ENCODE measurements at regions of chr17 and their contacts with region 1.

Region 1: DNA sequence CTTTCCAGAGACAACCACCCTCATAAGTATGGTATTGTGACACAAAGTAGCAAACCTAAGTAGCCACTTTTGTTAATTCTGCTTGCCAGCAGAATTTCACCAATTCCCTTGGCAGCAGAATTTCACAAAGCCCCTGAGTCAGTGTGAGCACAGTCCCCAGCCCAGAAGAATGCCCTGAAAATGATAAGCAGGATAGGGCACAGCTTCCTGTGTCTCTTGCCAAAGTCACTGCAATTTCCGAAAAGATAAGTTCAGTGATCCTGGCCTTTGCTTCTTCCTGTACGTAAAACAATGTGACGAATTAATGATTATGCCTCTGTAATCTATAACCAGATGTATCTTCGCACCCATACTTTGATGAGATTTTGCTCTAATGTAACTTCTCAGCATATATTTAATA is 16.0 kb upstream of the WIPF2 start:
- DNase-seq: no peak
- ATAC-seq: no peak
- H3K4me3 ChIP-seq: no peak overlapping the region
- H3K4me3 Mint-ChIP-seq: no peak overlapping the region
- H3K27ac ChIP-seq: no peak overlapping the region
- H3K27ac Mint-ChIP-seq: no peak overlapping the region
- H3K4me1 ChIP-seq: no peaks in the 10 kb centered on the region
- H3K4me1 Mint-ChIP-seq: peaks cover 0 to 8% (median 3%) of the 10 kb centered on the region in 7 donors
- H3K27me3 ChIP-seq: no peaks in the 10 kb centered on the region
- H3K27me3 Mint-ChIP-seq: peaks cover 0 to 14% (median 0%) of the 10 kb centered on the region in 5 donors

Region 2: DNA sequence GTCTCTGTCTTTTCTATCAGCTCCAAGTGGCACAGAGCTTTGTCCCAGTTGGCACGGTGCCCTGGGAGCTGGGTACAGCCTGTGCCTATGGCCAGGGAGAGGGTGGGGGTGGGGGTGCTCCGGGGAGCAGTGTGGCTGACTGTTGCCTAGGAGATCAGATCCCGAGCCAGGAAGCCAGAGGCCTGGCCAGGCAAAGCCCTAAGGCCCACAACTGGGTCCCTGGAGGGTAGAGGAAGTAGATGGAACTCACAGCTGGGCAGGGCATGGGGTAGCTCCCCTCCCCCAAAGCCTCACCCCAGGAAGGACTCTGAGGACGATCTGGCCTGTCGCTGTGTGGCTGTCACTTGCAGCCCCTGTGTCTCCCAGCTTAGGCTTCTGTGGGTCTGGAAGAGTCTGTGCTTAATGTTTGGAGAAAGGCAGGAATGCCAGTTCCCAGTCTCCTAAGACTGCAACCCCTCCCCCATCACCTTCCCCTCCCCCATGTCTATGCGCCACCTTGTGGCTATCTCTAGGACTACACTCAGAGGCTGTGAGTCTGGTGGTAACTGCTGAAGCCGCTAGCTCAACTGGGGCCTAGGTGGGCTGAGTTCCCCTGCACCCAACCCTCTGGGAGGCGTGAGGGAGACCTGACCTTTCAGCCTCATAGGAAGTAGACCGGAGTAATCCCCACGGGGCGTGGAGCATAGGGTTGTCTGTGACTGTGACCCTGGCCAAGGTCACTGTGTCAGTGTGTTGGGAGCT is 127.8 kb before region 1 on chr17:
- CTCF ChIA-PET with region 1: no interaction called
- POLR2A ChIA-PET with region 1: no interaction called
- intact Hi-C with region 1: no loop called
- DNase-seq: peak; percentile 45 to 80 (median 63)
- ATAC-seq: peak; percentile 93
- H3K4me3 ChIP-seq: no peak overlapping the region
- H3K4me3 Mint-ChIP-seq: peak overlapping the region in 8 of 10 donors; percentile 35 to 78 (median 71)
- H3K27ac ChIP-seq: peak overlapping the region; percentile 18
- H3K27ac Mint-ChIP-seq: peak overlapping the region in 8 of 9 donors; percentile 42 to 89 (median 68)
- H3K4me1 ChIP-seq: peaks cover 13 to 36% of the 10 kb centered on the region in 2 donors
- H3K4me1 Mint-ChIP-seq: peaks cover 7 to 67% (median 36%) of the 10 kb centered on the region in 7 donors
- H3K27me3 ChIP-seq: no peaks in the 10 kb centered on the region
- H3K27me3 Mint-ChIP-seq: no peaks in the 10 kb centered on the region

Region 3: GRCh38 chr17:40219073-40219860 is 16.1 kb after region 1 on chr17 and contains the start of gene WIPF2:
- CTCF ChIA-PET with region 1: interaction called, 9 read pairs
- POLR2A ChIA-PET with region 1: interaction called, 6 read pairs
- intact Hi-C with region 1: loop called (anchors 1 kb)
- DNase-seq: peak; percentile 88 to 97 (median 95)
- ATAC-seq: peak; percentile 96
- H3K4me3 ChIP-seq: peak within 1 kb of the TSS; percentile 74
- H3K4me3 Mint-ChIP-seq: peak within 1 kb of the TSS; percentile 86 to 100 (median 96)
- H3K27ac ChIP-seq: peak within 1 kb of the TSS; percentile 92
- H3K27ac Mint-ChIP-seq: peak within 1 kb of the TSS; percentile 96 to 100 (median 100)
- H3K4me1 ChIP-seq: peaks cover 9 to 10% of the 10 kb centered on the region in 2 donors
- H3K4me1 Mint-ChIP-seq: peaks cover 25 to 44% (median 32%) of the 10 kb centered on the region in 7 donors
- H3K27me3 ChIP-seq: no peaks in the 10 kb centered on the region
- H3K27me3 Mint-ChIP-seq: no peaks in the 10 kb centered on the region
- total RNA-seq, gene WIPF2: 24.8 to 31.8 (median 28.6) TPM

Region 4: GRCh38 chr17:40287494-40288369 is 84.6 kb after region 1 on chr17 and contains the start of gene CDC6:
- CTCF ChIA-PET with region 1: interaction called, 10 read pairs
- POLR2A ChIA-PET with region 1: interaction called, 4 read pairs
- intact Hi-C with region 1: loop called in 1 of 2 experiments (anchors 1 kb)
- DNase-seq: peak; percentile 90 to 99 (median 98)
- ATAC-seq: peak; percentile 97
- H3K4me3 ChIP-seq: peak within 1 kb of the TSS; percentile 70
- H3K4me3 Mint-ChIP-seq: peak within 1 kb of the TSS; percentile 93 to 99 (median 96)
- H3K27ac ChIP-seq: peak within 1 kb of the TSS; percentile 63
- H3K27ac Mint-ChIP-seq: peak within 1 kb of the TSS; percentile 84 to 98 (median 91)
- H3K4me1 ChIP-seq: peaks cover 3 to 11% of the 10 kb centered on the region in 2 donors
- H3K4me1 Mint-ChIP-seq: peaks cover 8 to 41% (median 22%) of the 10 kb centered on the region in 7 donors
- H3K27me3 ChIP-seq: no peaks in the 10 kb centered on the region
- H3K27me3 Mint-ChIP-seq: no peaks in the 10 kb centered on the region
- total RNA-seq, gene CDC6: 0.51 to 73.6 (median 0.85) TPM

Region 5: DNA sequence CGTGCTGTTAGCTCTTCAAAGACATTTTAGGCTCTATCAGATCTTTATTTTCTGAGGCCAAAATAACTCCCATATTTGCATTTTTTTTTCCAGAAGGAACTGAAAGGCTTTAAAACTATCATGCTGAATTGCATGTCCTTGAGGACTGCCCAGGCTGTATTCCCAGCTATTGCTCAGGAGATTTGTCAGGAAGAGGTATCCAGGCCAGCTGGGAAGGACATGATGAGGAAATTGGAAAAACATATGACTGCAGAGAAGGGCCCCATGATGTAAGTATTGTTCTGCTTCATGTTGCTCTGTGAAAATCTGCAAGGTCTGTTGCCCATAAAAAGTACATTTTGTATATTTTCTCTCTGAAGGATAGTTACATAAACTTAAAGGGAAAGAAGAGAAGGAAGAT is 90.2 kb after region 1 on chr17:
- CTCF ChIA-PET with region 1: interaction called, 10 read pairs
- POLR2A ChIA-PET with region 1: interaction called, 4 read pairs
- intact Hi-C with region 1: loop called in 1 of 2 experiments (anchors 1 kb)
- DNase-seq: no peak
- ATAC-seq: no peak
- H3K4me3 ChIP-seq: no peak overlapping the region
- H3K4me3 Mint-ChIP-seq: no peak overlapping the region
- H3K27ac ChIP-seq: no peak overlapping the region
- H3K27ac Mint-ChIP-seq: no peak overlapping the region
- H3K4me1 ChIP-seq: no peaks in the 10 kb centered on the region
- H3K4me1 Mint-ChIP-seq: peaks cover 0 to 38% (median 10%) of the 10 kb centered on the region in 7 donors
- H3K27me3 ChIP-seq: no peaks in the 10 kb centered on the region
- H3K27me3 Mint-ChIP-seq: no peaks in the 10 kb centered on the region

Region 6: GRCh38 chr17:40355123-40355803 is 152.1 kb after region 1 on chr17:
- CTCF ChIA-PET with region 1: no interaction called
- POLR2A ChIA-PET with region 1: no interaction called
- intact Hi-C with region 1: loop called (anchors 2 to 5 kb)
- DNase-seq: peak; percentile 63 to 93 (median 78)
- ATAC-seq: peak; percentile 86
- H3K4me3 ChIP-seq: no peak overlapping the region
- H3K4me3 Mint-ChIP-seq: peak overlapping the region in 1 of 10 donors; percentile 32
- H3K27ac ChIP-seq: no peak overlapping the region
- H3K27ac Mint-ChIP-seq: peak overlapping the region in 5 of 9 donors; percentile 6 to 69 (median 32)
- H3K4me1 ChIP-seq: no peaks in the 10 kb centered on the region
- H3K4me1 Mint-ChIP-seq: peaks cover 8 to 25% (median 18%) of the 10 kb centered on the region in 7 donors
- H3K27me3 ChIP-seq: no peaks in the 10 kb centered on the region
- H3K27me3 Mint-ChIP-seq: peaks cover 0 to 5% (median 0%) of the 10 kb centered on the region in 5 donors

Region 7: GRCh38 chr17:40362696-40363110 is 159.6 kb after region 1 on chr17:
- CTCF ChIA-PET with region 1: no interaction called
- POLR2A ChIA-PET with region 1: no interaction called
- intact Hi-C with region 1: loop called in 1 of 2 experiments (anchors 5 kb)
- DNase-seq: peak; percentile 60 to 90 (median 74)
- ATAC-seq: peak; percentile 88
- H3K4me3 ChIP-seq: peak overlapping the region; percentile 35
- H3K4me3 Mint-ChIP-seq: peak overlapping the region; percentile 10 to 87 (median 70)
- H3K27ac ChIP-seq: no peak overlapping the region
- H3K27ac Mint-ChIP-seq: peak overlapping the region in 1 of 9 donors; percentile 85
- H3K4me1 ChIP-seq: peaks cover 4 to 7% of the 10 kb centered on the region in 2 donors
- H3K4me1 Mint-ChIP-seq: peaks cover 4 to 37% (median 12%) of the 10 kb centered on the region in 7 donors
- H3K27me3 ChIP-seq: no peaks in the 10 kb centered on the region
- H3K27me3 Mint-ChIP-seq: peaks cover 0 to 23% (median 8%) of the 10 kb centered on the region in 5 donors